ENCODE measurements at regions of chr4 and their contacts with region 1.

Region 1: DNA sequence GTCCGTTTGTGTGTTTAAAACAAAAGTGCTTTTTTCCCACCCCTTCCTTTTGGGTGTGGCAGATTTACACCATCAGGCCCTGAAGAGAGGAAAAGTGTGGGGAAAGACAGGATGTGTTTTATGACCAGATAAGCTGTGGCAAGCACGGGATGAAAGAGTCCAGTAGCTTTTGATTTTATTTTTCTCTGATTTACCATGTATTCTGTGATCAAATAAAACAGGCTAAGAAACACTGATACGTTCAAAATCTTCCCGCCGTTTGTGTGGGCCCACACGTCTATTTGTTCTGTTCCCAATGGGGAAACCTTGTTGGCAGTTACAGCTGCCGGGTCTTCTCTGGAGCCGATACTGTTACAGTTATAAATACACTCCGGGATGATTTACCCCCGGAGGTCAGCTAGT is 10.8 kb downstream of the LRP2BP start:
- DNase-seq: no peak
- ATAC-seq: peak; percentile 71

Region 2: GRCh38 chr4:185227131-185227551 is 157.8 kb before region 1 on chr4:
- intact Hi-C with region 1: loop called in 1 of 2 experiments (anchors 5 kb)
- DNase-seq: no peak
- ATAC-seq: peak; percentile 84

Measured in left colon (tissue), 2 donors.